Activated naive CD4-positive, alpha-beta T cell treated with anti-CD3 and anti-CD28 coated beads, Interleukin-2, amount 10 ng/mL, durations not matched to agents 7 days and 5 days (primary cell): ENCODE measurements at regions of chr19 and their contacts with region 1.

Region 1: GRCh38 chr19:11987405-11988281 is 22.8 kb downstream of the ZNF763 start:
- DNase-seq: peak; percentile 97
- H3K4me3 Mint-ChIP-seq: peak overlapping the region; percentile 95
- H3K27ac Mint-ChIP-seq: peak overlapping the region; percentile 94
- H3K4me1 Mint-ChIP-seq: peaks cover 16% of the 10 kb centered on the region
- H3K27me3 Mint-ChIP-seq: peaks cover 4% of the 10 kb centered on the region

Region 2: DNA sequence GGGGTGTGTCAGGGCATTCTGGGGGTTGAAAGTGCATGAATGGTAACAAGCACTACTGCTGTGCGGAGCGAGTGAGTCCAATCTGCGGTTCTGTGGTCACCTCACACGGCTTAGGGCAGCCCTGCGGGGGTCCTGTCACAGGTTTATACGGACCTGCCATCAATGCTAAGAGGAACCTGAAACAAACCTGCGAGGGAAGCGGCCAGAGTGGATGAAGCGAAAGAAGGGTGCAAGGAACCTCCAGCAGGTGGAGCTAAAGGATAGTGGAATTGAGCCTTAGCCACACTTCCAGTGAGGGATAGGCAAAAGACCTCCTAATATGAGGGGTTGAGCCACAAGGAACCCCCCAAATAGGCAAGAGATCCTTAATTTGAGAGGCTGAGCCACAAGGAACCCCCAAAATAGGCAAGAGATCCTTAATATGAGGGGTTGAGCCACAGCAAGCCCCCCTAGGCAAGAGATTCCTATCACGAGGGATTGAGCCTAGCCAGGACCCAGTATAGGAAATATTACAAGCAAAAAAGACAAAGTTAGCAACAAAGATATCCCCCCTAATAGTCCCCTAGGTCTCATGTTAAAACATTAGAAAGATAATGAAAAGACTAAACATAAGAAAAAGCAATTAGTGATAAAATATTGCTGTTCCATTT is 106.4 kb before region 1 on chr19:
- CTCF ChIA-PET with region 1: interaction called, 13 read pairs
- DNase-seq: peak; percentile 75
- H3K4me3 Mint-ChIP-seq: no peak overlapping the region
- H3K27ac Mint-ChIP-seq: no peak overlapping the region
- H3K4me1 Mint-ChIP-seq: peaks cover 2% of the 10 kb centered on the region
- H3K27me3 Mint-ChIP-seq: no peaks in the 10 kb centered on the region

Region 3: GRCh38 chr19:11964858-11965645 is 22.6 kb before region 1 on chr19 and contains the start of gene ZNF763:
- CTCF ChIA-PET with region 1: interaction called, 36 read pairs
- DNase-seq: peak; percentile 95
- H3K4me3 Mint-ChIP-seq: peak within 1 kb of the TSS; percentile 86
- H3K27ac Mint-ChIP-seq: peak within 1 kb of the TSS; percentile 94
- H3K4me1 Mint-ChIP-seq: peaks cover 22% of the 10 kb centered on the region
- H3K27me3 Mint-ChIP-seq: no peaks in the 10 kb centered on the region